Ovary (tissue), 10 donors: ENCODE measurements at regions of chr1 and their contacts with region 1.

Region 1: GRCh38 chr1:226062558-226063223 is at the start of gene H3-3A:
- DNase-seq: peak; percentile 99 to 100 (median 100)
- H3K4me3 ChIP-seq: peak within 1 kb of the TSS; percentile 84
- H3K27ac ChIP-seq: peak within 1 kb of the TSS; percentile 95 to 99
- H3K4me1 ChIP-seq: peaks cover 3% of the 10 kb centered on the region
- H3K27me3 ChIP-seq: no peaks in the 10 kb centered on the region
- CTCF ChIP-seq: peak in 2 of 3 donors; percentile 39 to 46
- EP300 ChIP-seq: no peak
- POLR2A ChIP-seq: peak; percentile 96
- total RNA-seq, gene H3-3A: 266 to 526 (median 420) TPM

Region 2: GRCh38 chr1:225131869-225132268 is 930.8 kb before region 1 on chr1:
- intact Hi-C with region 1: no loop called
- DNase-seq: no peak
- H3K4me3 ChIP-seq: no peak overlapping the region
- H3K27ac ChIP-seq: no peak overlapping the region
- H3K4me1 ChIP-seq: no peaks in the 10 kb centered on the region
- H3K27me3 ChIP-seq: no peaks in the 10 kb centered on the region
- CTCF ChIP-seq: no peak
- EP300 ChIP-seq: no peak
- POLR2A ChIP-seq: no peak

Region 3: GRCh38 chr1:225999227-225999911 is 63.3 kb before region 1 on chr1 and contains the start of gene SDE2:
- intact Hi-C with region 1: loop called in 2 of 4 experiments (anchors 2 to 5 kb)
- DNase-seq: peak; percentile 100
- H3K4me3 ChIP-seq: peak within 1 kb of the TSS; percentile 86
- H3K27ac ChIP-seq: peak within 1 kb of the TSS; percentile 40 to 91
- H3K4me1 ChIP-seq: peaks cover 2% of the 10 kb centered on the region
- H3K27me3 ChIP-seq: no peaks in the 10 kb centered on the region
- CTCF ChIP-seq: peak in 1 of 3 donors; percentile 27
- EP300 ChIP-seq: peak; percentile 81
- POLR2A ChIP-seq: peak; percentile 91
- total RNA-seq, gene SDE2: 16.0 to 24.4 (median 18.3) TPM

Region 4: GRCh38 chr1:226162898-226163297 is 100.2 kb after region 1 on chr1:
- intact Hi-C with region 1: no loop called
- DNase-seq: no peak
- H3K4me3 ChIP-seq: no peak overlapping the region
- H3K27ac ChIP-seq: no peak overlapping the region
- H3K4me1 ChIP-seq: peaks cover 3% of the 10 kb centered on the region
- H3K27me3 ChIP-seq: no peaks in the 10 kb centered on the region
- CTCF ChIP-seq: no peak
- EP300 ChIP-seq: no peak
- POLR2A ChIP-seq: no peak

Region 5: DNA sequence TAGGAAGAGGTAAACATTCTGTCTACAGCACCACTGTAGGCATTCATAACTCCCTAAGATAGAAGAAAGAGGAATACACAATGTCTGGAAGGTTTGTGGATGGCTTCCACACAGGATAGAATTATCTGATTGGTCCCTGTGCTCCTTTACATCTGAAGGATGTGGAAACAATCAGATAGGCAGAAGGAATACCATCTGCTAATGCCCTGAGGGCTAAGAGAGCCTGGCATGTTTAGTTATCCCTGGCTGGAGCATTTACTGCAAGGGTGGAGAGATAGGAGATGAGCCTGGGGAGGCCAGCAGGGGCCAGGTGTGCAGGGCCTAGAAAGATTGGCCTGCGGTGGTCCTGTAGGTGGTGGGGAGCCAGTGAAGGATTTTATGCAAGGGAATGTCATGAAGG is 132.5 kb after region 1 on chr1:
- intact Hi-C with region 1: loop called in 1 of 4 experiments (anchors 10 kb)
- DNase-seq: no peak
- H3K4me3 ChIP-seq: no peak overlapping the region
- H3K27ac ChIP-seq: no peak overlapping the region
- H3K4me1 ChIP-seq: no peaks in the 10 kb centered on the region
- H3K27me3 ChIP-seq: no peaks in the 10 kb centered on the region
- CTCF ChIP-seq: no peak
- EP300 ChIP-seq: no peak
- POLR2A ChIP-seq: no peak

Region 6: GRCh38 chr1:227607336-227607898 is 1544.7 kb after region 1 on chr1:
- intact Hi-C with region 1: no loop called
- DNase-seq: no peak
- H3K4me3 ChIP-seq: no peak overlapping the region
- H3K27ac ChIP-seq: no peak overlapping the region
- H3K4me1 ChIP-seq: peaks cover 2% of the 10 kb centered on the region
- H3K27me3 ChIP-seq: no peaks in the 10 kb centered on the region
- CTCF ChIP-seq: no peak
- EP300 ChIP-seq: no peak
- POLR2A ChIP-seq: no peak